Dendritic cell treated with granulocyte-macrophage colony-stimulating factor and Interleukin-4, amounts not matched to agents 40 ng/mL and 50 ng/mL, for 4 days (primary cell): ENCODE measurements at regions of chr17 and their contacts with region 1.

Region 1: GRCh38 chr17:30981531-30982519 is 11.0 kb downstream of the RNF135 start:
- H3K4me3 Mint-ChIP-seq: no peak overlapping the region
- H3K27ac Mint-ChIP-seq: peak overlapping the region; percentile 26
- H3K4me1 Mint-ChIP-seq: peaks cover 23% of the 10 kb centered on the region
- H3K27me3 Mint-ChIP-seq: no peaks in the 10 kb centered on the region

Region 2: GRCh38 chr17:30906101-30906911 is 75.5 kb before region 1 on chr17 and contains the start of gene TEFM:
- intact Hi-C with region 1: no loop called
- H3K4me3 Mint-ChIP-seq: peak within 1 kb of the TSS; percentile 91
- H3K27ac Mint-ChIP-seq: peak within 1 kb of the TSS; percentile 88
- H3K4me1 Mint-ChIP-seq: peaks cover 37% of the 10 kb centered on the region
- H3K27me3 Mint-ChIP-seq: no peaks in the 10 kb centered on the region

Region 3: GRCh38 chr17:30942308-30943079 is 39.3 kb before region 1 on chr17:
- intact Hi-C with region 1: loop called (anchors 5 kb)
- H3K4me3 Mint-ChIP-seq: no peak overlapping the region
- H3K27ac Mint-ChIP-seq: no peak overlapping the region
- H3K4me1 Mint-ChIP-seq: peaks cover 14% of the 10 kb centered on the region
- H3K27me3 Mint-ChIP-seq: no peaks in the 10 kb centered on the region